ENCODE measurements at regions of chr22 and their contacts with region 1.

Region 1: GRCh38 chr22:41621099-41621910 is at the start of gene XRCC6:
- H3K4me3 ChIP-seq: peak within 1 kb of the TSS; percentile 98
- H3K27ac ChIP-seq: peak within 1 kb of the TSS; percentile 97
- H3K4me1 ChIP-seq: peaks cover 3% of the 10 kb centered on the region; the same call in 1 of the 2 replicates
- CTCF ChIP-seq: no peak

Region 2: DNA sequence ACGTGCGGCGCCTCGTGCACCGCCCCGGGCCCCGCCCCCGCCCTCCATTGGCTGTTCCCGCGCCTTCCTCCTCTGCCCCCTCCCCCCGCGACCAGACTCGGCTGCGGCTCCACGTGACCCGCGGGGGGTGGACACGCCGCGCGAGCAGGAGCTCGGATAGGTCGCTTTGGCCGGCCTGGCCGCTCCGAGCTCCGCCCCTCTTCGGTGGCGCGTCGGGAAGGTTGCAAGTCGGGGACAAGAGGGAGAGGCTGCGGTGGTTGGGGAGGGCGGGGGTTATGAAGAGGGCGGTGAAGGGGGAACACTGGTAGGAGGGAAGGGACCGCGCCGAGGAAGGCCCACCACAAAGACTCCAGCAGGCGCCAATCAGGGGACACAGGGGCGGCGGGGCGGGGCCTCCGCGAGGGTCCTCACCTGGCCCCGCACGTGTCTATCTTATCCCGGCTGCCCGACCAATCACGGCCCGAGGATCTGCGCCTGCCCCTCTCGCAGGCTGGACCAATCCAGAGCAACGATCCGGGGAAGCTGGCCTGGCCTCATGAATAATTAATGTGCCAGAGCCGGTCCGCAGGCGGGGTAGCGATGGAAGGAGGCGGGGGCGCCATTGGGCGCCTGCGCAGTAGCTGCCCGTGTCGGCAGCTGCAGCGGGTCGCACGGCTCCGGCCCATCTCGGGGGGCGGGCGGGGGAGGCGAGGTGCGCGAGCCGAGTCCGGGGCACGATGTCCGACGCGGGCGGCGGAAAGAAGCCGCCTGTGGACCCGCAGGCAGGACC is 239.8 kb before region 1 on chr22 and contains the start of gene TEF:
- CTCF ChIA-PET with region 1: no interaction called
- POLR2A ChIA-PET with region 1: interaction called, 10 read pairs
- H3K4me3 ChIP-seq: peak within 1 kb of the TSS; percentile 66
- H3K27ac ChIP-seq: peak within 1 kb of the TSS; percentile 75
- H3K4me1 ChIP-seq: peaks cover 9% of the 10 kb centered on the region
- CTCF ChIP-seq: no peak

Region 3: DNA sequence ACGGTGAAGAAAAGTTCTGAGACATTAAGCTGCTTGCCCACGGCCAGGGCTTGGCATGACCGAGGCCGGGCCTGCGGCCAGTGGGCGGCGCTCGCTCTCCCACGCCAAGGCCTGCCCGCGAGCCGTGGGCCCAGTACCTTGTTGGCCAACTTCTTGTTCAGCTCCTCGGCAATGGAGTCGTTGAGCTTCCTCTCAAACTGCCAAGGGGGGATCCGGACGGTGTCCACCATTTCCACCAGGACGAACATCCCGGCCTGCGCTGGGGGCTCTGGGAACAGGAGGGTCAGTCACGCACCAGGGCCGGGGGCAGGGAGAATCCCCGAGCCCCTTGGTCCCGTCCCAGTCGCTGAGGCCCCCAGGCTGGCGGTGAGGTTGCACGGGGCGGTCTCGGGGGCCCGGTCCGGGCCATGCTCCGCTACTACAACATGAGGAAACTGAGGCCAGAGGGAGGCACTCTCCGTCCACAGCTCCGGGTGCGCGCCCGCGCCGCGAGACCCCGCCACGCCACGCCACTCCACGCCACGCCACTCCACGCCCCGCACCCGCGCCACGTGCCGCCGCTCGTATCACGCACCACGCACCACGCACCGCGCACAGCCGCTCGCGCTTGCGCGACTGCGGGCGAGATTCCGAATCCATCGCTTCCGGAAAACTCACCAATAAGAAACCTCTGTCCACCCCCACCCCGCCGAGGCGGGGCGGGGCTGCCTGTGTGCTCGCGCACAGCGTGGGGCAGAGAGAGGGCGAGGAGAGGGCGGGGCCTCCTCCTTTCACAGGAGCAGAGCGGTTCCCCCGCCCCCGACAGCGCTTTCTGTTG is 77.2 kb before region 1 on chr22 and contains the start of gene POLR3H:
- CTCF ChIA-PET with region 1: no interaction called
- POLR2A ChIA-PET with region 1: interaction called, 14 read pairs
- H3K4me3 ChIP-seq: peak within 1 kb of the TSS; percentile 72
- H3K27ac ChIP-seq: peak within 1 kb of the TSS; percentile 93
- H3K4me1 ChIP-seq: peaks cover 8% of the 10 kb centered on the region
- CTCF ChIP-seq: peak; percentile 88

Region 4: DNA sequence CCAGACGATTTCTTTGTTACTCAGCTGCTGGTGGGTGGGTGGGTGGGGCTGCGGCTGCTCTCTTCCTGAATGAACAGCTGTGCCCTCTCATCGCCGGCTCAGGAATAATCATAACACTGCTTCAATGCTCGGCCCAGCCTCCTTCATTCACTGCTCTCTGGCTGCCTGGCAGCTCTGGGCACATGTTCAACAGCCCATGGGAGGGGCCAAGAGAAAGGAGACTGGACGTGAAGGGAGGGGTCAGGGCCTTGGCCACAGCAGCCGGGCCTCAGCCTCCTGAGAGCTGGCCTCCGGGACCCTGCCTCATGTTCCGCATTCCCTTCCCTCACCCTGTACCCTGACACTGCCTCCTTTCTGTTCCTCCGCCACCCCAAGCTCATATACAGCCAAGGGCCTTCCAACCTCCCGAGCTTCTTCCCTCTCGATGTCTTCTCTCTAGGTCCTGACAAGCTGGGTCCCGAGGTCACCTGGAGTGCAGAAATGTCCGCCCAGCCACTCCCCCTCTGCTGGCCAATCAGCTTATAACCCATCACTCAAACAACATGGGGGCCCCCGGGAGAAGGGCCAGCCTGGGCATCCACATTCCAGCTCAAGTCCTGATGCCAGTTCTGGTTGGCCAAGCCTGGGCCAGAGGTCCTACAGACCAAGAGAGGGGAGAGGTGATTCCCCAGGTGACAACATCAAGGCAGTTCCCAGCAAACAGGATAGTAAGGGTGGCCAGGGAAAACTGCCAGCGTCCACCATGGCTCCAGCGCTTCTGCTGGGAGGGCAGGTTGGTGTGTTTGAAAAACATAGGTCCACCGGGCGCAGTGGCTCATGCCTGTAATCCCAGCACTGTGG is 63.7 kb before region 1 on chr22:
- CTCF ChIA-PET with region 1: interaction called, 3 read pairs
- POLR2A ChIA-PET with region 1: interaction called, 16 read pairs
- H3K4me3 ChIP-seq: no peak overlapping the region
- H3K27ac ChIP-seq: no peak overlapping the region
- H3K4me1 ChIP-seq: no peaks in the 10 kb centered on the region; the same call in 1 of the 2 replicates
- CTCF ChIP-seq: no peak

Region 5: GRCh38 chr22:41603873-41604332 is 17.4 kb before region 1 on chr22:
- CTCF ChIA-PET with region 1: interaction called, 3 read pairs
- POLR2A ChIA-PET with region 1: interaction called, 12 read pairs
- H3K4me3 ChIP-seq: no peak overlapping the region
- H3K27ac ChIP-seq: no peak overlapping the region
- H3K4me1 ChIP-seq: no peaks in the 10 kb centered on the region
- CTCF ChIP-seq: no peak

Region 6: GRCh38 chr22:41636467-41636866 is 15.2 kb after region 1 on chr22:
- CTCF ChIA-PET with region 1: no interaction called
- POLR2A ChIA-PET with region 1: interaction called, 12 read pairs
- H3K4me3 ChIP-seq: no peak overlapping the region
- H3K27ac ChIP-seq: no peak overlapping the region
- H3K4me1 ChIP-seq: no peaks in the 10 kb centered on the region
- CTCF ChIP-seq: no peak

Region 7: DNA sequence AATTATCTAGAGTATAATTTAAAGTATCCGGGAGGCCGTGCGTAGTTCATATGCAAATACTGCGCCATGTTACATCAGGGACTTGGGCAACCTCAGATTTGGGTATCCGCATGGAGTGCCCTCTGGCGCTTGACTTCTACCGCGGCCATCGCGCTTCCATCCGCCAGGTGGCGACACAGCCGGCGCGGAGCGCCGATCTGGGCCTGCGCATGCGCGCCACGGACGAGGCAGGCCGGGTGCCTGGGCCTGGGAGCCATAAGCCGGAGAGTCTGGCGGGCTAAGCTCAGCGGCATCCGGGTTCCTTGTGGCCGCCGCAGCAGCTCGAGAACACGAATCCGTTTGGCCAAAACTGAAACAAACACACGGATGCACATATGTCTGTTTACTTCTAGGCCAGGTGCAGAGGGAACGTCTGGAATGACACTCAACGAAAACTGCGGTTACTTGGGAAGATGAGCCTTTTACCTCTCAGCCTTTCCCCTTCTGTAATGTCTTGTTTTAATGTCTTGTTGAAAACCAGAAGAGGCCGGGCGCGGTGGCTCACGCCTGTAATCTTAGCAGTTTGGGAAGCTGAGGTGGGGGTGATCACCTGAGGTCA is 45.5 kb after region 1 on chr22:
- CTCF ChIA-PET with region 1: interaction called, 8 read pairs
- POLR2A ChIA-PET with region 1: interaction called, 16 read pairs
- H3K4me3 ChIP-seq: peak overlapping the region; percentile 42
- H3K27ac ChIP-seq: peak overlapping the region; percentile 99
- H3K4me1 ChIP-seq: no peaks in the 10 kb centered on the region
- CTCF ChIP-seq: peak; percentile 100

Measured in HEK293 (cell line).